Right lobe of liver (tissue), 6 donors: ENCODE measurements at regions of chr5 and their contacts with region 1.

Region 1: GRCh38 chr5:35651002-35651756 is 33.5 kb downstream of the SPEF2 start:
- DNase-seq: peak in 2 of 3 donors; percentile 26 to 50
- ATAC-seq: peak; percentile 85 to 93 (median 92)
- H3K4me3 ChIP-seq: no peak overlapping the region
- H3K27ac ChIP-seq: no peak overlapping the region
- H3K4me1 ChIP-seq: no peaks in the 10 kb centered on the region
- H3K27me3 ChIP-seq: no peaks in the 10 kb centered on the region
- CTCF ChIP-seq: peak; percentile 56 to 66 (median 64)
- POLR2A ChIP-seq: no peak

Region 2: DNA sequence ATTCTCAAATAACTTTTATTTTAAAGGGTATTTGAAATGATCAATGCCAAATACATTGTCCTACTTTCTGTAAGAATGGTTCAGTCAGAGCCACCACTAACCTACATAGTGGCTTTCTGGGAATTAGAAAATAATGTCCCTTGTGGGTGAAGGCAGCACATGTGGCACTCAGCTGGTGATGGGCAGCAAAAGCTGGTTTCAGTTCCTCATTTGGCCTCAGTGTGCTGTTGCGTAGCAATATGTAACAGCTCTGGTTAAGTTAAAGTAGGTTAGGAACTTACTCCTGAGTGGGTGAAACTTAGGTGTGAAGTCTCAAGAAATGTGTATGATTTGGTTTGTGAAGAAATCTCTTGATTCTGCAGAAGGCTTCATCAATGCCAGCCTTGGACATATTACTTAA is 133.1 kb before region 1 on chr5:
- intact Hi-C with region 1: no loop called
- DNase-seq: no peak
- ATAC-seq: no peak
- H3K4me3 ChIP-seq: no peak overlapping the region
- H3K27ac ChIP-seq: no peak overlapping the region
- H3K4me1 ChIP-seq: no peaks in the 10 kb centered on the region
- H3K27me3 ChIP-seq: no peaks in the 10 kb centered on the region
- CTCF ChIP-seq: no peak
- POLR2A ChIP-seq: no peak

Region 3: GRCh38 chr5:35717718-35718117 is 66.5 kb after region 1 on chr5:
- intact Hi-C with region 1: no loop called
- DNase-seq: no peak
- ATAC-seq: no peak
- H3K4me3 ChIP-seq: no peak overlapping the region
- H3K27ac ChIP-seq: no peak overlapping the region
- H3K4me1 ChIP-seq: no peaks in the 10 kb centered on the region
- H3K27me3 ChIP-seq: no peaks in the 10 kb centered on the region
- CTCF ChIP-seq: no peak
- POLR2A ChIP-seq: no peak

Region 4: DNA sequence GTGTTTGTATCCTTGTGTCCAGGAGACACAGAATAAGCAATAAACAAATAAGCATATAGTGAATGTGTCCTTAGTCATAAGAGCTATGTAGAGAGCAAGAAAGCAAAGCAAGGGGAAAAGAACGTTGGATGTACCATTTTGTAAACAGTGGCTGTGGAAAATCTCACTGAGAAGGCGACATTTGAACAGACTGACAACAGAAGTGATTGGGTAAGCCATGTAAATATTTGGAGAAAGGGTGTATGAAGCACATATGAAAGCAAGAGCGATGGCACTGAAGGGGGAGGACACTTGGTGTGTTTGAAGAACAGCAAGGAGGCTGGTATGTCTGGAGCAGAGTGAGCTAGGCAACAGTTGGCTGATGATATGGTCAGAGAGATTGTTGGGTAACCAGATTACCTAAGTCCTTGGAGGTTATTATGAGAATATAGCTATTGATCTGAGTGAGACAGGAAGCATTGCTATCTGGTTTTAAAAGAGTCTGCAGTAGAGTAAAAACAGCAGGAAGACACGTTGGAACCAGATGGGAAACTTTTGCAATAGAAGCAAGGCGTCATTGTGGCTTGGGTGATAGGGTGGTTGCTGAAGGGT is 90.0 kb after region 1 on chr5:
- intact Hi-C with region 1: no loop called
- DNase-seq: peak in 2 of 3 donors; percentile 61 to 73
- ATAC-seq: peak; percentile 98 to 100 (median 98)
- H3K4me3 ChIP-seq: no peak overlapping the region
- H3K27ac ChIP-seq: no peak overlapping the region
- H3K4me1 ChIP-seq: no peaks in the 10 kb centered on the region
- H3K27me3 ChIP-seq: no peaks in the 10 kb centered on the region
- CTCF ChIP-seq: no peak
- POLR2A ChIP-seq: no peak

Region 5: GRCh38 chr5:35926389-35927051 is 275.3 kb after region 1 on chr5:
- intact Hi-C with region 1: loop called in 1 of 2 experiments (anchors 10 kb)
- DNase-seq: peak in 1 of 3 donors; percentile 53
- ATAC-seq: peak; percentile 80 to 86 (median 83)
- H3K4me3 ChIP-seq: no peak overlapping the region
- H3K27ac ChIP-seq: no peak overlapping the region
- H3K4me1 ChIP-seq: no peaks in the 10 kb centered on the region
- H3K27me3 ChIP-seq: no peaks in the 10 kb centered on the region
- CTCF ChIP-seq: peak; percentile 77 to 96 (median 84)
- POLR2A ChIP-seq: no peak

Region 6: DNA sequence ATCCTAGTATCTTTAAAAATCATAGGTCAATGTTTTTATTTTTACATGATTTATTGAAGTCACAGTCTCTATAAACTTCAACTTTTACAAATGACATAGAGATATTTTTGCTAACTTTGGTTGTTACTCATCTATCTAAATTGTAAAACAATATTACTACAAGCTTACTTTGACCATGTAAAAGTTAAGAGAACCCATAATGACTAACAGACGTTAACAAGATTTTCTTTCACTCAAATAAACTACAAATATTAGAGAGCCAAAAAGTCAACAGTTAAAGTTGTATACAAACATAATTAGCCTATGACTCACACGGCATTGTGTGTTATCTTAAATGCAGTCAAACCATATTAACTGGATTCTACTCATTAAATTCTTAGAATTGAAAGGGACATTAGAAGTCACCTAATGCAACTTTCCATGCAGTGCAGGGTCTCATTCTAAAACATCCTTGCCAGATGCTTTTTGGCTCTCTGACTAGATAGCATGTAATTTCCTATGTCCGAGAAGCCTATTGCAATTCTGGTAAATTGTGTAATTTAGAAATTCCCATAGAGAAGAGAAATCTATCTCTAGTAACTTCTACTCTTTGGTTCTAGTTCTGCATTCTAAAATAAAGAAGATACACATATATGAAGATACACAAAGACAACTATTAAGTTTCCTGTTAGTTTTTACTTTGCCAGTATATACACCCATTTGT is 457.7 kb after region 1 on chr5:
- intact Hi-C with region 1: no loop called
- DNase-seq: no peak
- ATAC-seq: peak in 1 of 4 donors; percentile 17
- H3K4me3 ChIP-seq: no peak overlapping the region
- H3K27ac ChIP-seq: no peak overlapping the region
- H3K4me1 ChIP-seq: no peaks in the 10 kb centered on the region
- H3K27me3 ChIP-seq: no peaks in the 10 kb centered on the region
- CTCF ChIP-seq: no peak
- POLR2A ChIP-seq: no peak